ENCODE measurements at regions of chr6 and their contacts with region 1.

Region 1: DNA sequence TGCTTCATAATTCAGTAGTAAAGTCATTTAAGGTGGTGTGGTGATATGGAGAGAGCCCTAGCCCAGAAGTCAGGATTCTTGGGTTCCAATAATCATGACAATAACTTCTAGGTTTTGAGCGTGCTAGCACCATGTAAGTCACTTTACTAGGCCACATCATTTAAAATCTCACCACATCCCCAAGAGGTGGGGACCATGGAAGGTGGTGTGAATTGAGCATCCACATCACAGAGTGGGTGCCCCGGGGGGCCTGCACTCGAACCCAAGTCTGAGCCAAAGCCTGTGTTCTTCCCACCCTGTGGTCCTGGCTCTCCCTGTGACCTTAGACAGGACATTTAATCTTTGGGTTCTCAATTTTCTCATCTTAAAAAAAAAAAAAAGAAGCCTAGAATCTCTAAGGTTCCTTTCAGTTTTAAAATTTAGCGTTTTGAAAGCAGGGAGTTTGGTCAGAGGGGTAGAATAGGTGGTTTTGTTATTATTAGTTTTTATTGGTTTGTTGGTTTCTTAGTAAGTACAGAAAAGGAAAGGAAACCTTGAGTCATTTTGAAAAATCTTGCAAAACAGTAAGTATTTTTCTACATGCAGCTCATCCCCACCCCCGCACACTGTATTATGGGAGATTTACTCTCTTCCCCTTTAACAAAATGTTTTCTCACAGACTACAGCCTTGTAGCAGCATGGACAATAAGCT is 26.4 kb downstream of the ARMC2 start:
- DNase-seq: peak; percentile 79
- ATAC-seq: peak; percentile 87
- H3K4me3 Mint-ChIP-seq: peak overlapping the region; percentile 51
- H3K27ac Mint-ChIP-seq: peak overlapping the region; percentile 89
- H3K4me1 Mint-ChIP-seq: peaks cover 41% of the 10 kb centered on the region
- H3K27me3 Mint-ChIP-seq: peaks cover 8% of the 10 kb centered on the region

Region 2: DNA sequence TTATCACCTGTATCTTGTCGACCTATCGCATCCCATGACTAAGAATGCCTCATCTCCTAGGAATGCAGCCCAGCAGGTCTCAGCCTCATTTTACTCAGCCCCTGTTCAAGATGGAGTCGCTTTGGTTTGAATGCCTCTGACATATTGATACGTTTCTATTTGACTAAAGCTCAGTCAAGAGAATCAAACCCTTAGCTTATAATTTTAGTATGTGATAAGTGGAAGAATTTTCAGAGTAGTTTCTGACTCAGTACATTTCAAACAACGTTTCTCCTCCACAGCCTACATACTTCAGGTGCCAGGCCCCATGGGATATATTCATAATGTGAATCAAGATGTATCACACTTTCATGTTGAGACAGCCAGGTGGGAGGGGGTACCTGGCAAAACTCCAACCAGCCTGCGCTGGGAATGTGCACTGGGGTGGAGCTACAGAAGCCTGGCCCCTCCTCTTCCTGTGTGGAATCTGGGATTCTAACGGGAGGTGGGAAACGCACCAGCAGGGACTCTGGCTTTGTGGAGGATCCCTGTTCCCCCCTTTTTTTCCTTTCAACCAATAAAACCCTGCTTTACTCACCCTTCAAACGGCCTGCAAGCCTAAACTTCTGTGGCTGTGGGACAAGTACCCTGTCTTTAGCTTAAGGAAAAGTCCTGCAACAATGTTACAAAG is 909.8 kb before region 1 on chr6:
- CTCF ChIA-PET with region 1: no interaction called
- POLR2A ChIA-PET with region 1: no interaction called
- intact Hi-C with region 1: loop called in 1 of 2 experiments (anchors 10 kb)
- DNase-seq: peak; percentile 90
- ATAC-seq: peak; percentile 96
- H3K4me3 Mint-ChIP-seq: no peak overlapping the region
- H3K27ac Mint-ChIP-seq: peak overlapping the region; percentile 88
- H3K4me1 Mint-ChIP-seq: peaks cover 25% of the 10 kb centered on the region
- H3K27me3 Mint-ChIP-seq: peaks cover 2% of the 10 kb centered on the region

Region 3: GRCh38 chr6:108835218-108835850 is 39.3 kb before region 1 on chr6:
- CTCF ChIA-PET with region 1: no interaction called
- POLR2A ChIA-PET with region 1: no interaction called
- intact Hi-C with region 1: loop called in 1 of 2 experiments (anchors 1 kb)
- DNase-seq: peak; percentile 93
- ATAC-seq: peak; percentile 96
- H3K4me3 Mint-ChIP-seq: no peak overlapping the region
- H3K27ac Mint-ChIP-seq: no peak overlapping the region
- H3K4me1 Mint-ChIP-seq: peaks cover 20% of the 10 kb centered on the region
- H3K27me3 Mint-ChIP-seq: no peaks in the 10 kb centered on the region

Region 4: DNA sequence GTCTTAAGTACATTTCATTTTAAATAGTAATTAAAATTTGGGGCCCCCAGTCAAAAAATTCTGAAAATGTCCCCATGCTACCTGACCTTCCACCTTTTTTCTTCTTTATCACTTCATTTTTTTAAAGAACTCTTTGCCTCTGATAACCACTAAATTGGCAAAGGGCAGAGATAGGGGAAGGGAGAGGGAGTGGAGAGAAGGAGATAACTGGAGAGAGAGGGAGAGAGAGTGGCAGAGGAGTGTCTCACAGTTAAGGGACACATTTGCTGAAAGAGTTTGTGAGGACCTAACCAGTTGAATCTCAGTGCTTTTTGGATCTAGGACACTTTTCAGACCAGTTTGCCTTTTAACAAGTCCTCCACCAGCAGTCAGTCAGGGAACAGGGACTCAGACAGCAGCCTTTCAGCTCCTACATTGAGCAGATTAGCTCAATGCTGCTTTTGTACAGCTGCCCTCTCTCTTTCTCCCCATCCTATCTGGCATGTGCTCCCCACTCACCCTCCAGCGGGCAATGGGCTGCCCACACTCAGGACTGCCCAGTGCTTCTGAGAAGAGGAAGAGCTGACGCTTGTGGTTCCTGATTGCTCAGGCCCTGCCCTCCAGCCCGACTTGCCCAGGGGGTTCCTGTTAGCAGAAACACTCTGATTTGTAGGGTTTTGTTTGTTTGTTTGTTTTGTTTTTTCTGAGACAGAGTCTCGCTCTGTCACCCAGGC is 12.0 kb before region 1 on chr6:
- CTCF ChIA-PET with region 1: interaction called, 12 read pairs
- POLR2A ChIA-PET with region 1: no interaction called
- intact Hi-C with region 1: no loop called
- DNase-seq: no peak
- ATAC-seq: no peak
- H3K4me3 Mint-ChIP-seq: no peak overlapping the region
- H3K27ac Mint-ChIP-seq: no peak overlapping the region
- H3K4me1 Mint-ChIP-seq: peaks cover 10% of the 10 kb centered on the region
- H3K27me3 Mint-ChIP-seq: no peaks in the 10 kb centered on the region

Region 5: GRCh38 chr6:110506177-110506576 is 1631.6 kb after region 1 on chr6:
- CTCF ChIA-PET with region 1: no interaction called
- POLR2A ChIA-PET with region 1: no interaction called
- intact Hi-C with region 1: no loop called
- DNase-seq: no peak
- ATAC-seq: no peak
- H3K4me3 Mint-ChIP-seq: no peak overlapping the region
- H3K27ac Mint-ChIP-seq: no peak overlapping the region
- H3K4me1 Mint-ChIP-seq: no peaks in the 10 kb centered on the region
- H3K27me3 Mint-ChIP-seq: no peaks in the 10 kb centered on the region

Measured in activated CD4-positive, alpha-beta T cell treated with anti-CD3 and anti-CD28 coated beads for 36 hours (primary cell).